HCT116 (cell line): ENCODE measurements at regions of chr12 and their contacts with region 1.

Region 1: GRCh38 chr12:101773650-101774162 is 34.4 kb upstream of the SYCP3 start:
- DNase-seq: peak; percentile 44
- ATAC-seq: peak; percentile 85
- H3K4me3 ChIP-seq: no peak overlapping the region
- H3K27ac ChIP-seq: no peak overlapping the region
- H3K4me1 ChIP-seq: no peaks in the 10 kb centered on the region
- H3K27me3 ChIP-seq: no peaks in the 10 kb centered on the region
- CTCF ChIP-seq: peak; percentile 81 to 91 (median 89)
- POLR2A ChIP-seq: no peak
- RAD21 ChIP-seq: peak; percentile 90

Region 2: DNA sequence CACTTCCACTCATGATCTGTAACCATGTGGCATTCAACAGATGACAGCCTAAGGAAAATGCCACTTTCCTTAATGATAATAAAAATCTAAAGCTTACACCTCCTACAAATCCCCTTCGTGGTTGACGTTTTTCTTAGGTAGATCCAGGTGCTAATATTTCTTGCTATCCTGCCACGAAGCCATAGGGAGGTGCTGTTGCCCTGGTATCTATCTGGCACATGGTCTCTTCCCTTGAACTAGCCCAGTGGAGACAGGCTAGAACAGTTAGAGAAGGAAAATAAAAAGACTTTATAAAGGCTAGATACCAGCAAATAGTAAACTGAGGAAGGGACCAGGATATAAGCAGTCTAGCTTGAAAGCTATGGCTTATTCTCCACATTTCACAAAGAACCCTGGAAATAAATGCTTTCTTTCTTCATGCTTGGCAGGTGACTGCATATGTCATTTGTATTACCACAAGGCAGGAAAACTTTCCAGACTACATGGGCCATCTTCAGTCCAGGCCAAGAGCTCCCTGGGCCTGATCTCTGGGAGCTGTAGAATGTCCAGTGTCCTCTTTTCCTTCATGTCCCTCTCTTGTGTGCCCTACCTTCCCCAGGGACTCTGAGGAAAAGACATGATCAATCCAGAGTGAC is 283.3 kb before region 1 on chr12:
- CTCF ChIA-PET with region 1: no interaction called
- POLR2A ChIA-PET with region 1: no interaction called
- RAD21 ChIA-PET with region 1: no interaction called
- intact Hi-C with region 1: loop called (anchors 5 kb)
- DNase-seq: peak; percentile 62
- ATAC-seq: peak; percentile 99
- H3K4me3 ChIP-seq: no peak overlapping the region
- H3K27ac ChIP-seq: no peak overlapping the region
- H3K4me1 ChIP-seq: no peaks in the 10 kb centered on the region
- H3K27me3 ChIP-seq: no peaks in the 10 kb centered on the region
- CTCF ChIP-seq: peak; percentile 57 to 78 (median 77)
- POLR2A ChIP-seq: no peak
- RAD21 ChIP-seq: peak; percentile 81

Region 3: GRCh38 chr12:101839324-101840283 is 65.9 kb after region 1 on chr12:
- CTCF ChIA-PET with region 1: interaction called, 11 read pairs
- POLR2A ChIA-PET with region 1: no interaction called
- RAD21 ChIA-PET with region 1: interaction called in 1 of 2 experiments, 3 read pairs
- intact Hi-C with region 1: loop called (anchors 1 kb)
- DNase-seq: peak; percentile 48
- ATAC-seq: peak; percentile 84
- H3K4me3 ChIP-seq: no peak overlapping the region
- H3K27ac ChIP-seq: no peak overlapping the region
- H3K4me1 ChIP-seq: peaks cover 0 to 6% of the 10 kb centered on the region in 2 experiments; a peak in 3 of 4 replicates
- H3K27me3 ChIP-seq: no peaks in the 10 kb centered on the region
- CTCF ChIP-seq: peak; percentile 67 to 89 (median 82)
- POLR2A ChIP-seq: no peak
- RAD21 ChIP-seq: peak; percentile 81

Region 4: GRCh38 chr12:102484428-102484958 is 710.8 kb after region 1 on chr12:
- CTCF ChIA-PET with region 1: no interaction called
- POLR2A ChIA-PET with region 1: no interaction called
- RAD21 ChIA-PET with region 1: no interaction called
- intact Hi-C with region 1: loop called (anchors 10 kb)
- DNase-seq: peak; percentile 34
- ATAC-seq: peak; percentile 78
- H3K4me3 ChIP-seq: no peak overlapping the region
- H3K27ac ChIP-seq: no peak overlapping the region
- H3K4me1 ChIP-seq: no peaks in the 10 kb centered on the region; a peak in 1 of 4 replicates
- H3K27me3 ChIP-seq: no peaks in the 10 kb centered on the region
- CTCF ChIP-seq: peak; percentile 60 to 89 (median 84)
- POLR2A ChIP-seq: no peak
- RAD21 ChIP-seq: peak; percentile 69

Region 5: GRCh38 chr12:102879144-102879763 is 1105.5 kb after region 1 on chr12:
- CTCF ChIA-PET with region 1: interaction called, 5 read pairs
- POLR2A ChIA-PET with region 1: no interaction called
- RAD21 ChIA-PET with region 1: no interaction called
- intact Hi-C with region 1: loop called (anchors 5 kb)
- DNase-seq: peak; percentile 76
- ATAC-seq: peak; percentile 88
- H3K4me3 ChIP-seq: no peak overlapping the region
- H3K27ac ChIP-seq: no peak overlapping the region
- H3K4me1 ChIP-seq: 0 out of 4 replicates have a peak, but pooled peaks cover 0 to 3% of the 10 kb centered on the region in 2 experiments
- H3K27me3 ChIP-seq: peaks cover 13% of the 10 kb centered on the region; the same call in 1 of the 2 replicates
- CTCF ChIP-seq: peak; percentile 54 to 95 (median 62)
- POLR2A ChIP-seq: no peak
- RAD21 ChIP-seq: peak; percentile 85